Esophagus squamous epithelium (tissue), 5 donors: ENCODE measurements at regions of chr1 and their contacts with region 1.

Region 1: GRCh38 chr1:228109073-228109961 is at the start of gene MRPL55:
- DNase-seq: peak; percentile 89
- H3K4me3 ChIP-seq: peak within 1 kb of the TSS; percentile 73 to 95 (median 80)
- H3K27ac ChIP-seq: peak within 1 kb of the TSS; percentile 91 to 96 (median 92)
- H3K4me1 ChIP-seq: peaks cover 13 to 31% (median 19%) of the 10 kb centered on the region in 3 donors
- H3K27me3 ChIP-seq: no peaks in the 10 kb centered on the region
- CTCF ChIP-seq: peak in 2 of 6 experiments; percentile 5 to 45
- POLR2A ChIP-seq: peak in 3 of 4 donors; percentile 87 to 97 (median 87)
- total RNA-seq, gene MRPL55: 33.8 to 62.2 (median 51.2) TPM

Region 2: DNA sequence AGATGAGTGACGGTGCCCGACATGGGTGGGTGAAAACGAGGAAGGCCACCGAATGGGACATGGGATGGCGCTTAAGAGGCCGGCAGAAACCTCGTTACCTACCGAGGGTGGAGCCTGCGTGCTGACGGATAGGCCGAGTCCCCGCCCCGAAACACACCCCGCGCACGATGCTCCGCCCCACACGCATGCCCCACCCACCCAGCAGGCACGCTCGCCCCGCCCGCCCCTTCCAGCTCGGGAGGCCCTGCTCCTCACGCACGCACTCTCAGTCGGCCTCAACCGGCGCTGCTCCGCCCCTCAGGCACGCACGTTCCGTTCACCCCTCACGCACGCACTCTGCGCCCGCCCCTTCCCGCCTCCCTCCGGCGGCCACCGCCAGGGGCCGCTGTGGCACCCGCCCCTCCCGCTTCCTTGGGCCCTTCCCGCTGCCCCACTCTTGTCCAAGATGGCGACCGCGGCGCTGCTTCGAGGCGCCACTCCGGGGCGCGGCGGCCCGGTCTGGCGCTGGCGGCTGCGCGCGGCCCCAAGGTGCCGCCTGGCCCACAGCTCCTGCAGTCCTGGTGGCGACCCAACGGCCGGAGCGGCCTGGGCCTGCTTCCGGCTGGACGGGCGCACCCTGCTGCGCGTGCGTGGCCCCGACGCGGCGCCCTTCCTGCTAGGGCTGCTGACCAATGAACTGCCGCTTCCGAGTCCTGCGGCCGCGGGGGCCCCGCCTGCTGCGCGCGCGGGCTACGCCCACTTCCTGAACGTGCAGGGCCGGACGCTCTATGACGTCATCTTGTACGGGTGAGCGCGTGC is 56.3 kb after region 1 on chr1 and contains the start of gene IBA57:
- intact Hi-C with region 1: loop called (anchors 10 kb)
- DNase-seq: peak; percentile 96
- H3K4me3 ChIP-seq: peak within 1 kb of the TSS; percentile 73 to 99 (median 76)
- H3K27ac ChIP-seq: peak within 1 kb of the TSS; percentile 99 to 100 (median 100)
- H3K4me1 ChIP-seq: peaks cover 32 to 60% (median 42%) of the 10 kb centered on the region in 3 donors
- H3K27me3 ChIP-seq: peaks cover 0 to 13% (median 0%) of the 10 kb centered on the region in 4 donors
- CTCF ChIP-seq: peak; percentile 73 to 98 (median 94)
- POLR2A ChIP-seq: peak in 3 of 4 donors; percentile 63 to 94 (median 94)
- total RNA-seq, gene IBA57: 4.8 to 9.1 (median 5.7) TPM

Region 3: GRCh38 chr1:228393248-228393699 is 284.0 kb after region 1 on chr1:
- intact Hi-C with region 1: no loop called
- DNase-seq: no peak
- H3K4me3 ChIP-seq: no peak overlapping the region
- H3K27ac ChIP-seq: peak overlapping the region; percentile 13 to 65 (median 32)
- H3K4me1 ChIP-seq: peaks cover 7 to 17% (median 9%) of the 10 kb centered on the region in 3 donors
- H3K27me3 ChIP-seq: no peaks in the 10 kb centered on the region
- CTCF ChIP-seq: peak in 5 of 6 experiments; percentile 32 to 61 (median 44)
- POLR2A ChIP-seq: no peak